Activated CD8-positive, alpha-beta T cell treated with anti-CD3 and anti-CD28 coated beads, Interleukin-2, amount 10 ng/mL, durations not matched to agents 7 days and 5 days (primary cell): ENCODE measurements at regions of chr19 and their contacts with region 1.

Region 1: GRCh38 chr19:35740423-35741202 is 1.6 kb downstream of the IGFLR1 start:
- DNase-seq: peak; percentile 99
- ATAC-seq: peak; percentile 74
- H3K4me3 Mint-ChIP-seq: peak overlapping the region; percentile 90
- H3K27ac Mint-ChIP-seq: peak overlapping the region; percentile 92
- H3K4me1 Mint-ChIP-seq: peaks cover 50% of the 10 kb centered on the region
- H3K27me3 Mint-ChIP-seq: no peaks in the 10 kb centered on the region

Region 2: DNA sequence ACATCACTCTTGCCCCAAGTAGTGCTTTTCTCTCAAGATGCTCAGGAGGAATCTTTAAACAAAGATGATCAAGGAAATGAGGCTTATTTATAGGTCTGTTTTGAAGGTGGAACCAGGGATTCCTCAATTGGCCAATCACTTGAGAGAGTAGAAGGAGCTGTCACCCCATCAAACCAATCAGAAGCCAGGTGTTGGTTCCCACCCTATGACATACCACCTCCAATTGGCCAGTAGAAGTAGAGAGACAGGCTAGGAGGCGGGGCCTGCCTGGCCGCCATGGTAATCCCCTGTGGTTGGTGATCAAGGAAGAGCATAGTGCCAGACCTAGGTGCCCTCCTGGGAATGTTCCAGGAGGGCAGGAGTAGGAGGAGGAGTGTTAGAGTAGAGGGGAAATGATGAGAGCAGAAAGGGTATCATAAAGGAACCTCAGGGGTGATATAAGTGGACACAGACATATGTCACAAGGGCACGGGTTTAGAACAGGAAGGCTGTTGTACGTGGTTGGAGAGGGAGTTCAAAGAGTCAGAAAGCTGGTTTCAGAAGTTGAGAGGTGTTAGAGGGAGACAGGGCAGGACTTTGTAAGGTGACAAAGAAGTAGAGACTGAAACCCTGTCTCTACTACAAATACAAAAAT is 144.1 kb before region 1 on chr19:
- CTCF ChIA-PET with region 1: no interaction called
- POLR2A ChIA-PET with region 1: no interaction called
- DNase-seq: peak; percentile 35
- ATAC-seq: peak; percentile 84
- H3K4me3 Mint-ChIP-seq: no peak overlapping the region
- H3K27ac Mint-ChIP-seq: peak overlapping the region; percentile 53
- H3K4me1 Mint-ChIP-seq: peaks cover 9% of the 10 kb centered on the region
- H3K27me3 Mint-ChIP-seq: peaks cover 15% of the 10 kb centered on the region

Region 3: DNA sequence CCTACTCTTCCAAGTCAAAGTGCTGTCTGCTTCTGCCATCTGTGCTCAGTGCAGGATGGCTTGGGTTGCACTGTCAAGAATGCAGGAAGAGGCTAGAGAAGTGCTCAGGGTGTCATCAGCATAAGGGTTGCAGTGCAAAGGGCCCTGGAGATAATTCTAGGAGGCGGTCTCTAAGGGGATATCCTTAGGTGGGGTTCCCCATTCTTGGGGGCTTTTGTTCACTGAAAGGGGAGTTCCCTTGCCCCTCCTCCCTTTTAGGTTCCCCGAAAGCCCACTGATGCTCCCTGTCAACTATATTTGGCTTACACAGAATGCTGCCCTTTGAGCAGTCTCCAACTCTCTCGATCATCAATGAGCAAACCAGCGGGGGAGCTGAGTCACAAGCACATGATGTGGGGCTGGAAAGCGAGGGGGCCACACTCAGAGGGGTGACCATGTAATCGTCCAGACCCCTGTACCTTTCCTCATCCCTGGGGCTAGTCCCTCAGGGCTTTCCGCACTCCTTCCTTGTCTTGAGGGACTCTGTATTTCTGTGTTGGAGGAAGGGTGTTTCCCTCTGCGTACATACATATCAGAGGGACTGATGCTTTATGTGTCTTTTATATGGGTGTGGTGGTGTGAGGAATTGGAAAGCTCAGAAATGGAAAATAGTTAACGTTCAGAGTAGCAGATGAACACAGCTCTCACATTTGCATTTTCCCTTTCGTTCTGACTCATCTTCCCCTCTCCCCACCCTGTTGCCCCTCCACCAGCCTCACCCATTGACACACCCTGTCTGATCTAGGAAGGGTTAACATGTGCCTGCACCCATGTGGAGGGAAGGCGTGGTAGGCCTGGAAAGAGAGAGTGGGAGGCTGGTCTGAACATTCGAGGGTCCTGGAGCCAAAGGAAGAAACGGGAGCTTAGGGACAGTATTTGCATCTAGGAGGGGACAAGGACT is 29.6 kb before region 1 on chr19:
- CTCF ChIA-PET with region 1: interaction called, 8 read pairs
- POLR2A ChIA-PET with region 1: interaction called, 13 read pairs
- DNase-seq: peak; percentile 75
- ATAC-seq: peak; percentile 29
- H3K4me3 Mint-ChIP-seq: peak overlapping the region; percentile 34
- H3K27ac Mint-ChIP-seq: peak overlapping the region; percentile 95
- H3K4me1 Mint-ChIP-seq: peaks cover 67% of the 10 kb centered on the region
- H3K27me3 Mint-ChIP-seq: no peaks in the 10 kb centered on the region

Region 4: GRCh38 chr19:35716801-35717666 is 23.6 kb before region 1 on chr19:
- CTCF ChIA-PET with region 1: interaction called, 8 read pairs
- POLR2A ChIA-PET with region 1: interaction called, 14 read pairs
- DNase-seq: peak; percentile 97
- ATAC-seq: peak; percentile 77
- H3K4me3 Mint-ChIP-seq: peak overlapping the region; percentile 83
- H3K27ac Mint-ChIP-seq: peak overlapping the region; percentile 89
- H3K4me1 Mint-ChIP-seq: peaks cover 65% of the 10 kb centered on the region
- H3K27me3 Mint-ChIP-seq: no peaks in the 10 kb centered on the region